ENCODE measurements at regions of chr5 and their contacts with region 1.

Region 1: DNA sequence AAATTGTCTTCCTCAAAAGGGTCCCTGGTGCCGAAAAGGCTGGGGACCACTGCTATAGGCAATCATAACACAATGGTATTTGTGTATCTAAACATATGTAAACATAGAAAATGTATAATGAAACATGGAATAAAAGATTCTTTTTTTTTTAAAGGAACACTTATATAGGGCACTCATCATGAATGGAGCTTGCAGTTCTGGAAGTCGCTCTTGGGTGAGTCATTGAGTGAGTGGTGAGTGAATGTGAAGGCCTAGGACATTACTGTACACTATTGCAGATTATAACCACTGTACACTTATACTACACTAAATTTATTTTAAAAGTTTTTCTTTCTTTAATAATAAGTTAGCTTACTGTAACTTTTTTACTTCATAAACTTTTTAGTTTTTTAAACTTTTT is 176.4 kb downstream of the ARRDC3 start:
- DNase-seq: no peak
- H3K4me3 ChIP-seq: no peak overlapping the region
- H3K27ac ChIP-seq: no peak overlapping the region
- H3K4me1 ChIP-seq: no peaks in the 10 kb centered on the region
- H3K27me3 ChIP-seq: no peaks in the 10 kb centered on the region
- CTCF ChIP-seq: no peak

Region 2: GRCh38 chr5:90759119-90759518 is 447.6 kb before region 1 on chr5:
- CTCF ChIA-PET with region 1: no interaction called
- POLR2A ChIA-PET with region 1: interaction called, 13 read pairs
- intact Hi-C with region 1: no loop called
- DNase-seq: no peak
- H3K4me3 ChIP-seq: no peak overlapping the region
- H3K27ac ChIP-seq: no peak overlapping the region
- H3K4me1 ChIP-seq: no peaks in the 10 kb centered on the region
- H3K27me3 ChIP-seq: no peaks in the 10 kb centered on the region
- CTCF ChIP-seq: no peak